ENCODE measurements at regions of chr7 and their contacts with region 1.

Region 1: DNA sequence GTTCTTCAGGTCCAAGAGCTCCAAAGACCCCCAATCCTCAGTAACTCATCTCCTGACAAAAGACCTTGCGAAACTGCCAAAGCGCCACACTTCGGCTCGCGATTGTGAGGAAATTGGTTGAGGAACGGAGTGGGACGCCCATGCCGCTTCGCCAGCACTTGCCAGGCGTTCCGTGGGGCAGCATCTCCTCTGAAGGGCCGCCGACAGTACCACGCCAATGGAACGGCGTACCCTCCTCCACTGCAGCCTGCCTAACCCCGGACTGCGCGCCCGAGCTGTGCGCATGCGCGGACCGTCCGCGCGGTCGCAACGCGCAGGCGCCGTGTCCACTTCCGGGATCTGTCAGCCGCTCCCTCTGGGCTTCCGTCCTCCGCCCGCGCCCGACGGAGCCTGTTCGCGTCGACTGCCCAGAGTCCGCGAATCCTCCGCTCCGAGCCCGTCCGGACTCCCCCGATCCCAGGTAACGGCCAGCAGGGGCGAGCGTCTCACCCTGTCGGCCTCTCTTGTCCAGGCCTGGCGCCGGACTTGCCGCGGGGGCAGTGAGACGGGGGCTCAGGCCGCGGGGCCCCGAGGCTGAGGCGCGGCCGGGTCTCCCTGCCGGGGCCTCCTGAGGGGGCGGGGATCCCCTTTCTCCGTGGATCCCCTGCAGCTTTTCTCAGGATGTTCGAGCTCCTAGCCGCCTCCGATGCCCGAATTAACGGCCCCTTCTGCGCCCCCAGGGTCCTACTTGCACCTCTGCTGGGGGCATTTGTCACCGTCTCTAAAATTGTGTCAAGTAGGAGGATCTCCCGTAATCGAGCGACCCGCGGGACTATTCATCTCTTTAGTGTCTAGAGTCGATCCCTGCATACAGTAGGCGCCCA is at the start of gene ARPC1A:
- DNase-seq: peak; percentile 91 to 96 (median 92)
- ATAC-seq: peak; percentile 88 to 95 (median 92)
- H3K4me3 ChIP-seq: peak within 1 kb of the TSS; percentile 69 to 100 (median 92)
- H3K27ac ChIP-seq: peak within 1 kb of the TSS; percentile 77 to 95 (median 88)
- H3K4me1 ChIP-seq: peaks cover 7 to 58% (median 46%) of the 10 kb centered on the region in 12 donors
- H3K27me3 ChIP-seq: no peaks in the 10 kb centered on the region
- CTCF ChIP-seq: peak in 5 of 12 donors; percentile 6 to 30 (median 24)
- POLR2A ChIP-seq: peak in 1 of 2 donors; percentile 80
- total RNA-seq, gene ARPC1A: 97.1 to 177 (median 146) TPM

Region 2: GRCh38 chr7:99272476-99273045 is 53.2 kb before region 1 on chr7 and contains the start of gene MYH16:
- intact Hi-C with region 1: no loop called
- DNase-seq: no peak
- ATAC-seq: no peak
- H3K4me3 ChIP-seq: no peak within 1 kb of the TSS
- H3K27ac ChIP-seq: no peak within 1 kb of the TSS
- H3K4me1 ChIP-seq: no peaks in the 10 kb centered on the region
- H3K27me3 ChIP-seq: no peaks in the 10 kb centered on the region
- CTCF ChIP-seq: no peak
- POLR2A ChIP-seq: no peak
- total RNA-seq, gene MYH16: not detected

Region 3: GRCh38 chr7:99340659-99341058 is 14.9 kb after region 1 on chr7:
- intact Hi-C with region 1: loop called in 1 of 10 experiments (anchors 1 kb)
- DNase-seq: no peak
- ATAC-seq: peak in 2 of 4 donors; percentile 14 to 32
- H3K4me3 ChIP-seq: no peak overlapping the region
- H3K27ac ChIP-seq: peak overlapping the region in 6 of 12 donors; percentile 14 to 81 (median 52)
- H3K4me1 ChIP-seq: peaks cover 0 to 16% (median 3%) of the 10 kb centered on the region in 12 donors
- H3K27me3 ChIP-seq: no peaks in the 10 kb centered on the region
- CTCF ChIP-seq: no peak
- POLR2A ChIP-seq: no peak

Measured in heart left ventricle (tissue), 16 donors.